CD8-positive, alpha-beta T cell (primary cell): ENCODE measurements at regions of chr11 and their contacts with region 1.

Region 1: DNA sequence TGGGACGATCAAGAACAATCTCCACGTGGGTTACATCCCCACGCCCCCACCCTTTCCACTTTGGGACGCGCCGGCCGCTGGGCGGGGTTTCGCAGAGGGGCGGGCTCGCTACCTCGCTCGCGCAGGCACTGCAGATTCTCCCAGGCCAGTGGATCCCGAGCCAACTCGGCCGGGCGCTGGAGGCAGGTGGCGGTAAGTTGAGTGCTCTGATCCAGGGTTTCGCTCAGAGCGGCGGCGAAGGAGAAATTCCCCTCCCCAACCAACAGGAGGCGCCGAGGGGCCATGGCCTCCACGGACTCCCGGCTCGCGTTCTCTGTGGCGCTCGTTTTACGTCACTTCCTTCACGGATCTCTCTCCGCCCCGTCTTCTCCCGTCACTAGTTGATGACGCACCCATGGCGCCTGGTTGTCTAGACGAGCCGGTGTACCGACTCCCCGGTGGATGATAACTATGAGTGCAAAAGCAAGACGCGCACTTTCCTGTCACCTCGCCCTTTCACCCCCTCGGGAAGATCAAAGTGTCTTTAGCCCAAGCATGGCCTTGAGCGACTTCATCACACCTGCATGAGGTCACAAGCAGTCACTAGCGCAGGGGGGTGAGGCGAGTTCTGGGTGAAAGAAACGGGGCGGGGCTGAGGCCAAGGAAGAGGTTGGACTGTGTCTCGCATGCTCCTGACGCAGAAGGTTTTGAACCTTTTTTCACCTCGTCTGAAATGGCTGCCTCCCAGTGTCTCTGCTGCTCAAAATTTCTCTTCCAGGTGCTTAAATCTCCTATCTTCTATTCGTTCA is at the starts of genes CFAP68 and FDXACB1:
- DNase-seq: peak; percentile 91 to 99 (median 95)
- ATAC-seq: peak; percentile 89
- H3K4me3 ChIP-seq: peak within 1 kb of the TSS; percentile 73 to 76
- H3K4me3 Mint-ChIP-seq: peak within 1 kb of the TSS; percentile 92
- H3K27ac ChIP-seq: peak within 1 kb of the TSS; percentile 98
- H3K27ac Mint-ChIP-seq: peak within 1 kb of the TSS; percentile 100
- H3K4me1 ChIP-seq: peaks cover 14% of the 10 kb centered on the region
- H3K4me1 Mint-ChIP-seq: peaks cover 24% of the 10 kb centered on the region
- H3K27me3 ChIP-seq: no peaks in the 10 kb centered on the region
- H3K27me3 Mint-ChIP-seq: no peaks in the 10 kb centered on the region
- CTCF ChIP-seq: peak; percentile 94
- total RNA-seq, gene CFAP68: 21.7 to 22.7 TPM
- total RNA-seq, gene FDXACB1: 4.3 to 5.4 TPM

Region 2: DNA sequence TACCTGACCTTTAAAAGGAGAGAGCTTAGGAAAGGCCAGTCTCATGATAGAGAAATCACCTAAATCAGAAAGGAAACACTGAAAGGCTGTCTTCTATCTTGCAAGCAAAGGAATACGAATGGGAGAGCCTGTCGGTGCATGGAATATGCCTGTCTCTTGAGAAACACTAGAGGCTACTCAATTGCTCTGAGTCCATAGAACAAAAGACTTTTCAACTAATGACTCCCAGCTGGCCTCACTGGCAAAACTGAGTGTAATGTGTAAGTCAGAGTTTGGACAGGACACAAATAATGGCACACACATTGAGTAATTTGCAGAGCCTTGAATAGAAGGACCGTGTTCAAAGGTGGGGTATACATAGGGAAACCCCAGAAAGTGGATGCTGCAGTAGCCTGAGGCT is 995.8 kb before region 1 on chr11:
- CTCF ChIA-PET with region 1: no interaction called
- POLR2A ChIA-PET with region 1: no interaction called
- intact Hi-C with region 1: no loop called
- DNase-seq: no peak
- ATAC-seq: no peak
- H3K4me3 ChIP-seq: no peak overlapping the region
- H3K4me3 Mint-ChIP-seq: no peak overlapping the region
- H3K27ac ChIP-seq: no peak overlapping the region
- H3K27ac Mint-ChIP-seq: no peak overlapping the region
- H3K4me1 ChIP-seq: no peaks in the 10 kb centered on the region
- H3K4me1 Mint-ChIP-seq: no peaks in the 10 kb centered on the region
- H3K27me3 ChIP-seq: no peaks in the 10 kb centered on the region
- H3K27me3 Mint-ChIP-seq: peaks cover 9% of the 10 kb centered on the region
- CTCF ChIP-seq: no peak

Region 3: GRCh38 chr11:111766093-111766833 is 112.8 kb before region 1 on chr11 and contains the start of gene PPP2R1B:
- CTCF ChIA-PET with region 1: no interaction called
- POLR2A ChIA-PET with region 1: no interaction called
- intact Hi-C with region 1: loop called (anchors 2 kb)
- DNase-seq: peak; percentile 33 to 83 (median 73)
- ATAC-seq: peak; percentile 98
- H3K4me3 ChIP-seq: peak within 1 kb of the TSS; percentile 86 to 97
- H3K4me3 Mint-ChIP-seq: peak within 1 kb of the TSS; percentile 99
- H3K27ac ChIP-seq: peak within 1 kb of the TSS; percentile 63 to 67
- H3K27ac Mint-ChIP-seq: peak within 1 kb of the TSS; percentile 97
- H3K4me1 ChIP-seq: peaks cover 12% of the 10 kb centered on the region
- H3K4me1 Mint-ChIP-seq: peaks cover 39% of the 10 kb centered on the region
- H3K27me3 ChIP-seq: no peaks in the 10 kb centered on the region
- H3K27me3 Mint-ChIP-seq: no peaks in the 10 kb centered on the region
- CTCF ChIP-seq: no peak
- total RNA-seq, gene PPP2R1B: 47.4 to 53.8 TPM

Region 4: DNA sequence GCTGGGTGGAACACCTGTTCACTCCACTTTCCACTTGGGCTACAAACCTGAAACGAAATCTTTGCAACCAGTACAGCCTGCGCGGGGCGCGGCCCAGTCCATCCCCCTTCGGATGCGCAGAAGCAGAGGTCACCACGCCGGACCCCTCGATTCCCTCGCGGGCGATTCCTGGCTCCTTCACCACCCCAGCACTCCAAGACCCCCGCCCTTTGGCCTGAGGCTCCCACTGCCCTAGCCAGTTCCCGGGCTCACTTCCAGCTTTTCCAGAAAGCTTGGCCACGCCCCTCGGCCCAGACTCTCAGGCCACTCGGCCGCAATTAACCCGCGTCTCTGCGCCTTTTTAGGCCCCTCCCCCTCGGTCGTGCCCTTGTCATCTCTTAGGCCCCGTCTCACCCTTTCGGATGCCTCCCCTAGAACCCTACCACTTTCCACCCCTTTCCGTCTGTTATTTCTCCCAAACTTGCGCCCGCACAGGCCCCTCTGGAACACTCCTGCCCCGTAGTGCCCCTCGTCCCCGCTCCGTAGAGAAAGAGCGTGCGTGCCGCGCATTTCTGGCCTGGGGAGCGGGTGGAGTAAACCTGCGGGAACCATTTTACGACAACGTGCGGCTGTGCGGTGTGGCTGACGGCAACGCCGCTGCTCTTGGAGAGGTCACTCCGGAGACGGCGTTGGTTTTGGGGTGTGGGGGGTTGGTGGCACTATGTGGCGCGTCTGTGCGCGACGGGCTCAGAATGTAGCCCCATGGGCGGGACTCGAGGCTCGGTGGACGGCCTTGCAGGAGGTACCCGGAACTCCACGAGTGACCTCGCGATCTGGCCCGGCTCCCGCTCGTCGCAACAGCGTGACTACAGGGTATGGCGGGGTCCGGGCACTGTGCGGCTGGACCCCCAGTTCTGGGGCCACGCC is 146.0 kb after region 1 on chr11 and contains the start of gene DLAT:
- CTCF ChIA-PET with region 1: no interaction called
- POLR2A ChIA-PET with region 1: no interaction called
- intact Hi-C with region 1: loop called (anchors 1 to 2 kb)
- DNase-seq: peak; percentile 61 to 90 (median 84)
- ATAC-seq: peak; percentile 89
- H3K4me3 ChIP-seq: peak within 1 kb of the TSS; percentile 87 to 95
- H3K4me3 Mint-ChIP-seq: peak within 1 kb of the TSS; percentile 100
- H3K27ac ChIP-seq: peak within 1 kb of the TSS; percentile 68 to 78
- H3K27ac Mint-ChIP-seq: peak within 1 kb of the TSS; percentile 98
- H3K4me1 ChIP-seq: peaks cover 21% of the 10 kb centered on the region
- H3K4me1 Mint-ChIP-seq: peaks cover 27% of the 10 kb centered on the region
- H3K27me3 ChIP-seq: no peaks in the 10 kb centered on the region
- H3K27me3 Mint-ChIP-seq: no peaks in the 10 kb centered on the region
- CTCF ChIP-seq: no peak
- total RNA-seq, gene DLAT: 14.5 to 14.7 TPM

Region 5: GRCh38 chr11:112226062-112226830 is 347.2 kb after region 1 on chr11 and contains the start of gene PTS:
- CTCF ChIA-PET with region 1: no interaction called
- POLR2A ChIA-PET with region 1: no interaction called
- intact Hi-C with region 1: loop called (anchors 1 to 2 kb)
- DNase-seq: peak; percentile 66 to 94 (median 82)
- ATAC-seq: peak; percentile 89
- H3K4me3 ChIP-seq: peak within 1 kb of the TSS; percentile 71 to 81
- H3K4me3 Mint-ChIP-seq: peak within 1 kb of the TSS; percentile 95
- H3K27ac ChIP-seq: peak within 1 kb of the TSS; percentile 91 to 100
- H3K27ac Mint-ChIP-seq: peak within 1 kb of the TSS; percentile 99
- H3K4me1 ChIP-seq: peaks cover 10% of the 10 kb centered on the region
- H3K4me1 Mint-ChIP-seq: peaks cover 31% of the 10 kb centered on the region
- H3K27me3 ChIP-seq: no peaks in the 10 kb centered on the region
- H3K27me3 Mint-ChIP-seq: no peaks in the 10 kb centered on the region
- CTCF ChIP-seq: no peak
- total RNA-seq, gene PTS: 83.5 to 87.9 TPM

Region 6: DNA sequence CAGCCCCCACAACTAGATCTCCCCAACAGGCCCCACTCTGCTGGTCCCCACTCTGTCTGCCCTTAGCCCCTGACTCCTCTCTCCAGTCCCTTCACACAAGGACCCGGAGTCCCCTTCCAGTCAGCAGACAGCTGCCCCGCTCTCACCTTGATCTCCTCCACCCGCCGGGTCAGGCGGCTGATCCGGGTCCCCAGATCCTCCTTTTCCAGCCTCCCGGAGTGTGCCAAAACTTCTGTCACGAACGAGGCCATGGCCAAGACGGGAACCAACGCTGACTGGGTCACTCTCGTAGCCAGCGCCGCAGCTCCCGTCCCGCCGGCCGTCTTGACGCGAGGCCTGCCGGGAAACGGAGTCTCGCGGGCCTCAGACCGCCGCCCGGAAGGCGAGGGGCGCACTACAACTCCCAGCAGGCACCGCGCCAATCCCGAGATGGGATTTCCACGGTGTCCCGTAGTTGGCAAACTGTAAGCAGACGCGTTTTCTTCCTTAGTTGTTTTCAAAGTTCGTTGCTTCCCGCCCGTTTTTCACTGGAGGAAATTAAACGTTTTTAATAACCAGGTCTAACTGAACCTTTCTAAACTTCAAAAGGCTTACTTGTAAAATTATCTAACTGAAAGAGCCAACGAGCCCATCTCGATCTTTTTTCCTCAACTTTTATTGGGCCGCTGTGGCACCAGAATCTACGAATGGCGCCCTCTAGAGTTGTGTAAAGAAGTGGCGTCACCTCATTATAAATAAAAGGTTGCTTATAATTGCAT is 1894.6 kb after region 1 on chr11 and contains the start of gene ZW10:
- CTCF ChIA-PET with region 1: no interaction called
- POLR2A ChIA-PET with region 1: no interaction called
- intact Hi-C with region 1: loop called in 1 of 2 experiments (anchors 5 kb)
- DNase-seq: peak; percentile 79 to 96 (median 91)
- ATAC-seq: peak; percentile 98
- H3K4me3 ChIP-seq: peak within 1 kb of the TSS; percentile 89 to 90
- H3K4me3 Mint-ChIP-seq: peak within 1 kb of the TSS; percentile 99
- H3K27ac ChIP-seq: peak within 1 kb of the TSS; percentile 59 to 73
- H3K27ac Mint-ChIP-seq: peak within 1 kb of the TSS; percentile 89
- H3K4me1 ChIP-seq: peaks cover 3% of the 10 kb centered on the region
- H3K4me1 Mint-ChIP-seq: peaks cover 28% of the 10 kb centered on the region
- H3K27me3 ChIP-seq: no peaks in the 10 kb centered on the region
- H3K27me3 Mint-ChIP-seq: no peaks in the 10 kb centered on the region
- CTCF ChIP-seq: peak; percentile 96
- total RNA-seq, gene ZW10: 2.6 to 2.8 TPM